Activated CD4-positive, alpha-beta T cell treated with anti-CD3 and anti-CD28 coated beads, Interleukin-2, amount 10 ng/mL, durations not matched to agents 24 days and 14 days (primary cell): ENCODE measurements at regions of chr20 and their contacts with region 1.

Region 1: DNA sequence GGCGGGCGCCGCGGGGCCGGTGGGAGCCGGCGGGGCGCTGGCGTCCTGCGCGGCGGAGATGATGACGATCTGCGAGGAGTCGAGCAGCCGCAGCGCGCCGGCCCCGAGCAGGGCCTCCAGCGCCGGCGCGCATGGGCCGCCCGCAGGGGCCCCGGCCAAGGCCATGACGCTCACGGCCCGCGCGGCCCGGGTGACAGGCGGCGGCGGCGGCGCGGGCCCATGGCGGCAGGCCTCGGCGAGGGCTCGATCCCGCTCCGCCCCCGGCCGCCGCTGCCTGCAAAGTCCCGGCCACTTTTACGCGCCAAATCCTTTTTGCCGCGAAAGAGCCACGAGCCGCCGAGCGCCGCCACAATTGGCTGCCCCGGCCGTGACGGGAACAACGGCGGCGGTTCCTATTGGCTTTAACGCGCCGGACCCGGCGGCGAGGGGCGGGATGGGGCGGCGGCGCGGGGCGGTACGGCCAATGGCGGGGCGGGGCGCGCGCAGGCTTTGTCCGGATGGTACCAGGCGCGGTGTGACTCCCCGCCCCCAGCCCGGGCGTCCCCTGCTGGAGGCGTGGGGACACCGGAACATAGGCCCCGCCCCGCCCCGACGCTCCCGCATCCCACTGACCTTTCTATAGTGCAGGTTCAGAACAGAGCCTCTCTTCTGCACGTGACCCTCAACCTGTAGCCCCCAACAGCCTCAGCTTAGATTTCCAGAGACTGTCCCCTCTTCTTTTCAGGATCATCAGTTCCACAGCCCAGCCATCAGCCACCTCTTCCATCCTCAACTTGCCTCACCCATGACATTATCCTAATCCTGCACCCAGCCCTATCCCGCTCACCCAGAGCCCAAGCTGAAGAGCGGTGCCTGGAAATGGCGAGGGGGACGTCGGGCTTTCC is at the start of gene E2F1:
- DNase-seq: peak; percentile 99
- H3K4me3 Mint-ChIP-seq: peak within 1 kb of the TSS; percentile 96
- H3K27ac Mint-ChIP-seq: peak within 1 kb of the TSS; percentile 93
- H3K4me1 Mint-ChIP-seq: peaks cover 70% of the 10 kb centered on the region
- H3K27me3 Mint-ChIP-seq: no peaks in the 10 kb centered on the region
- total RNA-seq, gene E2F1: 77.2 and 78.3 TPM in 2 replicates

Region 2: GRCh38 chr20:33640297-33640696 is 46.0 kb before region 1 on chr20:
- intact Hi-C with region 1: no loop called
- DNase-seq: no peak
- H3K4me3 Mint-ChIP-seq: no peak overlapping the region
- H3K27ac Mint-ChIP-seq: no peak overlapping the region
- H3K4me1 Mint-ChIP-seq: no peaks in the 10 kb centered on the region
- H3K27me3 Mint-ChIP-seq: no peaks in the 10 kb centered on the region

Region 3: GRCh38 chr20:33674295-33675135 is 11.8 kb before region 1 on chr20 and contains the start of gene NECAB3:
- intact Hi-C with region 1: loop called (anchors 1 kb)
- DNase-seq: peak; percentile 94
- H3K4me3 Mint-ChIP-seq: peak within 1 kb of the TSS; percentile 92
- H3K27ac Mint-ChIP-seq: peak within 1 kb of the TSS; percentile 89
- H3K4me1 Mint-ChIP-seq: peaks cover 41% of the 10 kb centered on the region
- H3K27me3 Mint-ChIP-seq: no peaks in the 10 kb centered on the region
- total RNA-seq, gene NECAB3: 29.0 and 30.0 TPM in 2 replicates

Region 4: GRCh38 chr20:33719989-33720709 is 33.8 kb after region 1 on chr20 and contains the start of gene PXMP4:
- intact Hi-C with region 1: loop called (anchors 2 kb)
- DNase-seq: peak; percentile 97
- H3K4me3 Mint-ChIP-seq: peak within 1 kb of the TSS; percentile 79
- H3K27ac Mint-ChIP-seq: peak within 1 kb of the TSS; percentile 83
- H3K4me1 Mint-ChIP-seq: peaks cover 23% of the 10 kb centered on the region
- H3K27me3 Mint-ChIP-seq: no peaks in the 10 kb centered on the region
- total RNA-seq, gene PXMP4: 5.4 and 5.5 TPM in 2 replicates

Region 5: DNA sequence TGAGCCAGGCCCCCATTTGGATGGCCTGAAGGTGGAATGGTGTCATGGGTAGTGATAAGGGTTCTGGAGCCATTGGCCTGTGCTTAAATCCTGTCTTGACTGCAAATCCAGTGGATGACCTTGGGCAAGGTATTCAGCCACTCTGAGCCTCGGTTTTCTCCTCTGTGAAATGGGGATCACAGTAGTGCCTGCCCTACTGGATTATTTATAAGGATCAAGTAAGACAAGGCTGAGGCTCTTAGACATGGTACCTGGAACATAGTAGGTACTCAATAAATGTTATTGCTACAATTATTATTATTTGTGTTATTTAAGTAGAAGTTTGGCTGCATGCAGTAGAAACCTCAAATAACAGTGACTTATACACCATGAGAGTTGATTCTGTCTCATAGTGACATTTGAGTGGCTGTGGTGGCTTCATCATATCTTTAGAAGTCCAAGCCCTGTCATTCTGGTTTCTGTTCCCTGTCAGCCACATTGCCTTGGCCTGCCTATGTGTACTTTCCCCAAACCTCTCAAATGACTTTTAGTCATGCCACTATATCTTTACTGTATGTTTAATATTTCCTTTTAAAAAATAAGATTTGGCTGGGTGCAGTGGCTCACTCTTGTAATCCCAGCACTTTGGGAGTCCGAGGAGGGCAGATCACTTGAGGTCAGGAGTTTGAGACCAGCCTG is 87.2 kb after region 1 on chr20:
- intact Hi-C with region 1: loop called (anchors 5 kb)
- DNase-seq: peak; percentile 60
- H3K4me3 Mint-ChIP-seq: no peak overlapping the region
- H3K27ac Mint-ChIP-seq: no peak overlapping the region
- H3K4me1 Mint-ChIP-seq: peaks cover 14% of the 10 kb centered on the region
- H3K27me3 Mint-ChIP-seq: no peaks in the 10 kb centered on the region

Region 6: DNA sequence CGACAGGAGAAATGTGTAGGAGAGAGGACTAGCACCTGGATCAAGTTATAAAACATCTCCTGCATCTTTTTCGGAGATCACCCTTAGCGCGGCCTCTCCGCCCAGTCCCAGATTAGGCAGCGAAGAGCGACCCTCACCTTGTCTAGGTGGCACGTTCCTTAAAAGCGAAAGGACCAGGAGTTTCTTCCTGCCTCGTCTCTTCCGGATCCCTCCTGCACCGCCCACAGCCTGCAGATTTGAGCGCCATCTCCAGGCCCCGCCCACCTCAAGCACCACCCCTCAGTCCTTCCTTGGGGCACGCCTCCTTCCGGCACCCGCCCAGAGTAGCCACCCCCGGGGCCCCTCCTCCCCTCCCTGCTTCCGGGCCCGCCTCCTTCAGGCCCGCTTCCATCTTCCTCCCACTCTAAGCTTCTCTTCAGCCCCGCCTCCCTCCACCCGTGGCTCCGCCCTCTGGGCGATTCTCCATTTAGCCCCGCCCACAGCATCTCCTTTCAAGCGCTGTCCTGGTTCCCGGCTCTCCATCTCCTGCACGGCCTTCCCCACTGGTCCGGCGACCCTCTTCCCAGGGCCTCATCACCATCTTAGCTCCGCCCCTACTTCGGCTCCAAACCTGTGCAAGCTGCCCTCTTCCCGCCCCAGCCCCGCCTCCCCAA is 306.7 kb after region 1 on chr20:
- intact Hi-C with region 1: loop called (anchors 10 kb)
- DNase-seq: peak; percentile 100
- H3K4me3 Mint-ChIP-seq: peak overlapping the region; percentile 83
- H3K27ac Mint-ChIP-seq: peak overlapping the region; percentile 96
- H3K4me1 Mint-ChIP-seq: peaks cover 48% of the 10 kb centered on the region
- H3K27me3 Mint-ChIP-seq: no peaks in the 10 kb centered on the region

Region 7: GRCh38 chr20:34004790-34005457 is 318.6 kb after region 1 on chr20:
- intact Hi-C with region 1: no loop called
- DNase-seq: no peak
- H3K4me3 Mint-ChIP-seq: no peak overlapping the region
- H3K27ac Mint-ChIP-seq: no peak overlapping the region
- H3K4me1 Mint-ChIP-seq: peaks cover 61% of the 10 kb centered on the region
- H3K27me3 Mint-ChIP-seq: no peaks in the 10 kb centered on the region